ENCODE measurements at regions of chr10 and their contacts with region 1.

Region 1: GRCh38 chr10:68826764-68827591 is at the start of gene STOX1:
- DNase-seq: peak; percentile 18 to 66 (median 48)
- ATAC-seq: peak; percentile 65 to 74
- H3K4me3 Mint-ChIP-seq: peak within 1 kb of the TSS; percentile 74 to 86 (median 80)
- H3K27ac Mint-ChIP-seq: peak within 1 kb of the TSS in 6 of 10 donors; percentile 3 to 75 (median 48)
- H3K4me1 Mint-ChIP-seq: peaks cover 4 to 26% (median 17%) of the 10 kb centered on the region in 4 donors
- H3K27me3 Mint-ChIP-seq: no peaks in the 10 kb centered on the region
- polyA plus RNA-seq, gene STOX1: 0.29 to 1.1 (median 1.0) TPM

Region 2: GRCh38 chr10:68684413-68684812 is 142.6 kb before region 1 on chr10:
- POLR2A ChIA-PET with region 1: no interaction called
- DNase-seq: peak in 1 of 10 donors; percentile 4
- ATAC-seq: no peak
- H3K4me3 Mint-ChIP-seq: peak overlapping the region in 3 of 10 donors; percentile 33 to 59 (median 50)
- H3K27ac Mint-ChIP-seq: peak overlapping the region in 2 of 10 donors; percentile 52 to 68
- H3K4me1 Mint-ChIP-seq: no peaks in the 10 kb centered on the region
- H3K27me3 Mint-ChIP-seq: no peaks in the 10 kb centered on the region

Region 3: DNA sequence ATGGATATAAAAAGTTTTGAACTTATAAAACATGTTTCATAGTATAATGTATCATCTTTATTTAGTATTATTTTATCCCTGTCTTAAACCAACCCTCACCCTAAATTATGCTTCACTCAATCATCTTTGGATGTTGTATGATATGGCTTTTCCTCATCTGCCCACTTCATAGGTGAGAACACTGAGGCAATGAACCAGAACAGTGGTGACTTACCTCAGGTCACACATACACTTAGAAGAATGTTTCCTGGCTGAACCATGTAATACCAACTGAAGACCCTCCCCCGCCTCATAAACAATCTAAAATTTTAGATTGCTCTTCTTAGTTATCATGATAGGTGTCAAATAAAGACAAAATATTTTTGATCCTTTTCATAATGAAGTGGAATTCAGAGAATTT is 22.3 kb before region 1 on chr10:
- POLR2A ChIA-PET with region 1: no interaction called
- DNase-seq: no peak
- ATAC-seq: no peak
- H3K4me3 Mint-ChIP-seq: no peak overlapping the region
- H3K27ac Mint-ChIP-seq: no peak overlapping the region
- H3K4me1 Mint-ChIP-seq: peaks cover 0 to 4% (median 0%) of the 10 kb centered on the region in 4 donors
- H3K27me3 Mint-ChIP-seq: no peaks in the 10 kb centered on the region

Region 4: DNA sequence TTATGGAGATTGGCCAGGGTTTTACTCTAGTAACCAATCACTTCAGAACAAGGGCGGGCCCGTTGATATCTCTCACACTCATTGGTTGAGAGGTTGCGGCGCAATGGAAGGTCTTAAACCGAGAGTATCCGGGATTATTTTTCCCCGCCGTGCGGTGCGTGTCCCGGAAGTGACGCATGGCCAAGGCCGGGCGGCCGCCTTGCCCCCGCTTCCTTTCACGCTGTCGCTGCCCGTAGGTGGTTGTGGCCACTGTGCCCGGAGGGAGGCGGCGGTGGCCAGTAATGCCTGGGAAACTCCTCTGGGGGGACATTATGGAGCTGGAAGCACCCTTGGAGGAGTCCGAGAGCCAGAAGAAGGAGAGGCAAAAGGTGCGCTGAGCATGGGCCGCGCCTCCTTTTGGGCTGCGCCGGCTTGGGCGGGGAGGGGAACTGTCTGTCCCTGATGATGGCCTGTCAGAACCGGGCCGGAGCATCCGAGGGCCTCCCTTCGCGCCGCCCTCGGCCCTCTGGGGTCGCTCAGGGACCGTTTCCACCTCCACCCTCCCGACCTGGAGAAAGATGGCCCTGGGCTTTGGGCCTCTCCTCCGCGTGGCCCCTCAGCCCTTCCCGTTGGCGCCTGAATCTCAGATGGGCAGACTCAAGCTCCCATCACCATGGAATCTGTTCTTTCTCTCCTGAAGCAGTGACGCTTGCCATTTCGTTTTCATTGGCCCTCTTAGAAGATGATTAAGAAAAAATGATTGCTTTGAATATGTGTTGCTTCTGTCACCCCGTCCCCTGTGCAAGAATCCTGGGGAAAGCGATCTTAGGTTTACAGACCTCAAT is 74.3 kb after region 1 on chr10 and contains the start of gene DDX50:
- POLR2A ChIA-PET with region 1: interaction called, 20 read pairs
- DNase-seq: peak; percentile 83 to 98 (median 96)
- ATAC-seq: peak; percentile 96
- H3K4me3 Mint-ChIP-seq: peak within 1 kb of the TSS; percentile 87 to 100 (median 98)
- H3K27ac Mint-ChIP-seq: peak within 1 kb of the TSS; percentile 97 to 100 (median 99)
- H3K4me1 Mint-ChIP-seq: peaks cover 24 to 49% (median 47%) of the 10 kb centered on the region in 4 donors
- H3K27me3 Mint-ChIP-seq: peaks cover 0 to 3% (median 0%) of the 10 kb centered on the region in 5 donors
- polyA plus RNA-seq, gene DDX50: 34.1 to 45.7 (median 41.6) TPM

Measured in naive thymus-derived CD8-positive, alpha-beta T cell (primary cell).